Dendritic cell treated with granulocyte-macrophage colony-stimulating factor and Interleukin-4, amounts not matched to agents 40 ng/mL and 50 ng/mL, for 4 days (primary cell): ENCODE measurements at regions of chr11 and their contacts with region 1.

Region 1: GRCh38 chr11:14463623-14464022 is 36.0 kb downstream of the COPB1 start:
- H3K4me3 Mint-ChIP-seq: no peak overlapping the region
- H3K27ac Mint-ChIP-seq: no peak overlapping the region
- H3K4me1 Mint-ChIP-seq: no peaks in the 10 kb centered on the region
- H3K27me3 Mint-ChIP-seq: no peaks in the 10 kb centered on the region

Region 2: DNA sequence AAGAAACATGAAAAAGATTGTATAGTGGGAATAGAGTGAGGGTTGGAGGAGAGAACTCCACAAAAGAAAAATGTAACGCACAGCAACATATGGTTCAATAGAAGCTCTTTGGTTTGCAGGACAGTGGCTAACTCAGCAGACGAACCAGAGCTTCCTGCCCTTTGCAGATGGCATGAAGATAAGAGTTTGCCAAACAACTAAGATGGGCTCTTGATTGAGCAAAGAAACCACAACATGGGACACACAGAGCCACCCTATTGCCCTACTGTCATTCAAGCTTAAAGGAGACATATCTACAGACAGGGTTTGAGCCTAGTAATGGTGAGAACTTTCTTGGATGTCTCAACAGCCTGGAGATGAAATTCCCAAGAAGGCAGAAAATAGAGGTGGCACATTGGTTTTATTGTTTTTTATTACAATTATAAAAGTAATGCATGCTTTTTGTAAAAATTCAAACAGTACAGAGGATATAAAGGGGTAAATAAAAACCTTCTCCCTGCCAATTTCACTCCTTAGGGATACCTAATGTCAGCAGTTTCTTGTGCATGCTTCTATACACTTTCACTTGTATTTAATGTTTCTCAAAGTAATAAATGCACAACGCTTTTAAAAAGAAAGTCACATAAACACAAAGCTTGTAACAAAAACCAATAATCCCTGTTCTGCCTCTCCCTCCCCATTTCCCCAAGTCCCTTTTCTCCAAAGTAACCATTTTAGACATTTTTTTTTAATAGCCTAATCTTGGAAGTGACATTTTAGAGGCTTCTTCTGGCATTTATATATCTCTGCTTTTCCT is 27.7 kb before region 1 on chr11:
- intact Hi-C with region 1: no loop called
- H3K4me3 Mint-ChIP-seq: no peak overlapping the region
- H3K27ac Mint-ChIP-seq: no peak overlapping the region
- H3K4me1 Mint-ChIP-seq: peaks cover 5% of the 10 kb centered on the region
- H3K27me3 Mint-ChIP-seq: no peaks in the 10 kb centered on the region

Region 3: GRCh38 chr11:14499554-14500180 is 36.0 kb after region 1 on chr11 and contains the start of gene COPB1:
- intact Hi-C with region 1: loop called (anchors 5 kb)
- H3K4me3 Mint-ChIP-seq: peak within 1 kb of the TSS; percentile 95
- H3K27ac Mint-ChIP-seq: peak within 1 kb of the TSS; percentile 91
- H3K4me1 Mint-ChIP-seq: peaks cover 20% of the 10 kb centered on the region
- H3K27me3 Mint-ChIP-seq: no peaks in the 10 kb centered on the region

Region 4: GRCh38 chr11:14513800-14514199 is 50.2 kb after region 1 on chr11:
- intact Hi-C with region 1: loop called (anchors 5 kb)
- H3K4me3 Mint-ChIP-seq: no peak overlapping the region
- H3K27ac Mint-ChIP-seq: no peak overlapping the region
- H3K4me1 Mint-ChIP-seq: peaks cover 8% of the 10 kb centered on the region
- H3K27me3 Mint-ChIP-seq: no peaks in the 10 kb centered on the region